CD8-positive, alpha-beta T cell (primary cell): ENCODE measurements at regions of chr12 and their contacts with region 1.

Region 1: DNA sequence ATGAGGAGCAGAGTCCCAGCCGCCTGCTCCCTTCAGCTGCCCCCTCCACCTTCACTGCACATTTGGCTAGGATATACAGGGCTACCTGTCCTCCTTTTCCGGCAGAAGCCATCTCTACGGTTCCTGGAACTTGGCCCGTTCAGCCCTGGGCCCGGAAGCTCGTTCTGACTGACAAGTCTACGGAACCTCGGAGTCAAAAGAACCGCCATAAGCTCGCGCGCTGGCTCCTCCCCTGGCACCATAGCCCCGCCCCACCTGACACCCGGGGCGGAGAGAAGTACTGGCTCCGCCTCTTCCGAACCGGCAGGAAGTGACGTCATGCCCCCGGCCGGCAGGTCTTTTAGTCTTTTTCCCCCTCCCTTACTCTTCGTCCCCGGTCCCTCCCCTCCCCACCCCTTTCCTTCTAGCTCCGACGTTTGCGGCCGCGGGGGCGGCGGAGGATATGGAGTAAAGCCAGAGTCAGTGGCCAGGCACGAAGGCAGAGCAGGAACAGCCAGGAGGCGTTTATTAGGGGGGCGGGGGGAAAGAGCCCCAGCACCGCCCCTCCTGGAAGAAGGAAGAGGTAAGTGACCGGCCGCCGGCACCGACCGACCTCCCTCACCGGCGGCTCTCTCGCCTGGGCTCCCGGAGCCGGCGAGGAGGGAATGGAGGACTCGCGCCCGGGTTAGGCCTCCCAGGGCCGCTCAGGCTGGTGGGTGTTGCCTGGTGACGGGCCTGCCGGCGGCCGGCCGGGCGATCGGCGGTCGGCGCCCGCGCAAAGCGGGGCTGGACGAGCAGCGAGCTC is at the starts of genes DEPDC4 and SCYL2:
- DNase-seq: peak; percentile 84 to 97 (median 93)
- ATAC-seq: peak; percentile 93
- H3K4me3 ChIP-seq: peak within 1 kb of the TSS; percentile 81 to 96
- H3K4me3 Mint-ChIP-seq: peak within 1 kb of the TSS; percentile 99
- H3K27ac ChIP-seq: peak within 1 kb of the TSS; percentile 92 to 95
- H3K27ac Mint-ChIP-seq: peak within 1 kb of the TSS; percentile 98
- H3K4me1 ChIP-seq: peaks cover 19% of the 10 kb centered on the region
- H3K4me1 Mint-ChIP-seq: peaks cover 43% of the 10 kb centered on the region
- H3K27me3 ChIP-seq: no peaks in the 10 kb centered on the region
- H3K27me3 Mint-ChIP-seq: no peaks in the 10 kb centered on the region
- CTCF ChIP-seq: no peak
- total RNA-seq, gene DEPDC4: 0.33 TPM in 1 of 2 experiments, not detected in the other
- total RNA-seq, gene SCYL2: 40.9 to 48.4 TPM

Region 2: GRCh38 chr12:98503592-98504367 is 1763.2 kb before region 1 on chr12:
- CTCF ChIA-PET with region 1: no interaction called
- POLR2A ChIA-PET with region 1: no interaction called
- intact Hi-C with region 1: loop called in 1 of 2 experiments (anchors 5 kb)
- DNase-seq: peak; percentile 89 to 97 (median 94)
- ATAC-seq: peak; percentile 89
- H3K4me3 ChIP-seq: peak overlapping the region; percentile 89 to 96
- H3K4me3 Mint-ChIP-seq: peak overlapping the region; percentile 99
- H3K27ac ChIP-seq: peak overlapping the region; percentile 91 to 99
- H3K27ac Mint-ChIP-seq: peak overlapping the region; percentile 99
- H3K4me1 ChIP-seq: peaks cover 3% of the 10 kb centered on the region
- H3K4me1 Mint-ChIP-seq: peaks cover 20% of the 10 kb centered on the region
- H3K27me3 ChIP-seq: no peaks in the 10 kb centered on the region
- H3K27me3 Mint-ChIP-seq: no peaks in the 10 kb centered on the region
- CTCF ChIP-seq: no peak

Region 3: DNA sequence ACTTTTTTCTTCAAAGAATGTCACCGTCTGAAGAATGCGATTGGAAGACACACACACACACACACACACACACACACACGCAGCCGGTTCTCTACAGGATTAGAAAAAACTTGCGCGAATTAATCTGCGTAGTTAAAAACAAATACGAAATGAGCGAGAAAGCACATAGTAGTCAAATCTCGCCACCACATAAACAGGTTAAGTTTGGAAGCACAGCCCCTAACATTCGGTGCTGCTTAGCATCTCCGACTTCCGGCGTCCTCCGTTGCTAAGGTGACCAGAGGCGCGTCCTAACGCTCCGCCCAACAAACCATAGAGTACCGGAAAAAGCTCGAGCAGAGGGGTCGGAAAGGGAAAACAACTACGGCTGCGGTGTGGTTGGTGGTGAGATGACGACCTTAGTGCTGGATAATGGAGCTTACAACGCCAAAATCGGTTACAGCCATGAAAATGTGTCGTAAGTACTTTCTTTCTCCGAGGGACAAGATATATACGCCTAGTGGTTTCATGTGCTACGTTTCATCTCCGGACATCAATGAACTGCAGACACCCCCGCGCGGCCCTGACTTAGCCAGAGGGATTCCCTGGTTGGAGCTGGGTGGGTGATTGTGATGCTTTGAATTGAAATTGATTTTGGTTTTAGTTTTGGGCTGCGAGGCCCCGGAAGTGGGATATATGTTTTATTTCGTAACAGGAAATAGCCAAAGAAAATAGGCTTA is 66.4 kb before region 1 on chr12 and contains the start of gene ACTR6:
- CTCF ChIA-PET with region 1: interaction called, 3 read pairs
- POLR2A ChIA-PET with region 1: interaction called, 30 read pairs
- intact Hi-C with region 1: loop called (anchors 1 kb)
- DNase-seq: peak; percentile 96 to 99 (median 98)
- ATAC-seq: peak; percentile 82
- H3K4me3 ChIP-seq: peak within 1 kb of the TSS; percentile 57 to 75
- H3K4me3 Mint-ChIP-seq: peak within 1 kb of the TSS; percentile 97
- H3K27ac ChIP-seq: peak within 1 kb of the TSS; percentile 90 to 91
- H3K27ac Mint-ChIP-seq: peak within 1 kb of the TSS; percentile 100
- H3K4me1 ChIP-seq: peaks cover 19% of the 10 kb centered on the region
- H3K4me1 Mint-ChIP-seq: peaks cover 41% of the 10 kb centered on the region
- H3K27me3 ChIP-seq: no peaks in the 10 kb centered on the region
- H3K27me3 Mint-ChIP-seq: no peaks in the 10 kb centered on the region
- CTCF ChIP-seq: no peak
- total RNA-seq, gene ACTR6: 18.8 to 21.4 TPM

Region 4: DNA sequence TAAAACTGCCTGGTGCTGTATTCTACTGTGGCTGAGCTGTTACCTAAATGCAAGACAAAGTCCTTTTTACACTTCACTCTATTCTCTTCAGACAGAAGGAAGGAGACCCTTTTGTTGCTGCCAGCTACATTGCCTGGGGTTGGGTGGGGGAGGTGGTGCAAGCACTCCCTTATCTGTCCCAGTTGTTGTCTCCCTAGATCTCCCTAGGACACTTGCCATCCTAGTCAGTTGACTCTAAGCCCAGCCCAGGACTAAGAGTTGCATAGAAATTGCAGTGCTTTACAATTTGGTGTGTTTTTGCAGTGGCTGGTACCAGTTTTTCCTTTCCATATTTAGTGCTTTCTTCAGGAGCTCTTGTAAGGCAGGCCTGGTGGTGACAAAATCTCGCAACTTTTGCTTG is 35.1 kb after region 1 on chr12:
- CTCF ChIA-PET with region 1: no interaction called
- POLR2A ChIA-PET with region 1: no interaction called
- intact Hi-C with region 1: no loop called
- DNase-seq: no peak
- ATAC-seq: no peak
- H3K4me3 ChIP-seq: no peak overlapping the region
- H3K4me3 Mint-ChIP-seq: no peak overlapping the region
- H3K27ac ChIP-seq: no peak overlapping the region
- H3K27ac Mint-ChIP-seq: no peak overlapping the region
- H3K4me1 ChIP-seq: no peaks in the 10 kb centered on the region
- H3K4me1 Mint-ChIP-seq: no peaks in the 10 kb centered on the region
- H3K27me3 ChIP-seq: no peaks in the 10 kb centered on the region
- H3K27me3 Mint-ChIP-seq: no peaks in the 10 kb centered on the region
- CTCF ChIP-seq: no peak

Region 5: GRCh38 chr12:101280006-101280505 is 1013.0 kb after region 1 on chr12 and contains the start of gene UTP20:
- CTCF ChIA-PET with region 1: no interaction called
- POLR2A ChIA-PET with region 1: no interaction called
- intact Hi-C with region 1: loop called in 1 of 2 experiments (anchors 5 kb)
- DNase-seq: peak; percentile 84 to 96 (median 94)
- ATAC-seq: peak; percentile 100
- H3K4me3 ChIP-seq: peak within 1 kb of the TSS; percentile 98 to 100
- H3K4me3 Mint-ChIP-seq: peak within 1 kb of the TSS; percentile 96
- H3K27ac ChIP-seq: peak within 1 kb of the TSS; percentile 30 to 65
- H3K27ac Mint-ChIP-seq: peak within 1 kb of the TSS; percentile 80
- H3K4me1 ChIP-seq: peaks cover 11% of the 10 kb centered on the region
- H3K4me1 Mint-ChIP-seq: peaks cover 26% of the 10 kb centered on the region
- H3K27me3 ChIP-seq: peaks cover 0 to 4% of the 10 kb centered on the region in 2 experiments
- H3K27me3 Mint-ChIP-seq: peaks cover 6% of the 10 kb centered on the region
- CTCF ChIP-seq: no peak
- total RNA-seq, gene UTP20: 11.2 to 12.9 TPM

Region 6: GRCh38 chr12:101830367-101831325 is 1563.6 kb after region 1 on chr12 and contains the start of gene GNPTAB:
- CTCF ChIA-PET with region 1: no interaction called
- POLR2A ChIA-PET with region 1: no interaction called
- intact Hi-C with region 1: loop called in 1 of 2 experiments (anchors 2 kb)
- DNase-seq: peak; percentile 94 to 98 (median 96)
- ATAC-seq: peak; percentile 93
- H3K4me3 ChIP-seq: peak within 1 kb of the TSS; percentile 73 to 88
- H3K4me3 Mint-ChIP-seq: peak within 1 kb of the TSS; percentile 98
- H3K27ac ChIP-seq: peak within 1 kb of the TSS; percentile 68 to 75
- H3K27ac Mint-ChIP-seq: peak within 1 kb of the TSS; percentile 95
- H3K4me1 ChIP-seq: peaks cover 29% of the 10 kb centered on the region
- H3K4me1 Mint-ChIP-seq: peaks cover 40% of the 10 kb centered on the region
- H3K27me3 ChIP-seq: no peaks in the 10 kb centered on the region
- H3K27me3 Mint-ChIP-seq: no peaks in the 10 kb centered on the region
- CTCF ChIP-seq: peak; percentile 53
- total RNA-seq, gene GNPTAB: 40.4 to 46.9 TPM